Naive thymus-derived CD8-positive, alpha-beta T cell (primary cell): ENCODE measurements at regions of chr5 and their contacts with region 1.

Region 1: DNA sequence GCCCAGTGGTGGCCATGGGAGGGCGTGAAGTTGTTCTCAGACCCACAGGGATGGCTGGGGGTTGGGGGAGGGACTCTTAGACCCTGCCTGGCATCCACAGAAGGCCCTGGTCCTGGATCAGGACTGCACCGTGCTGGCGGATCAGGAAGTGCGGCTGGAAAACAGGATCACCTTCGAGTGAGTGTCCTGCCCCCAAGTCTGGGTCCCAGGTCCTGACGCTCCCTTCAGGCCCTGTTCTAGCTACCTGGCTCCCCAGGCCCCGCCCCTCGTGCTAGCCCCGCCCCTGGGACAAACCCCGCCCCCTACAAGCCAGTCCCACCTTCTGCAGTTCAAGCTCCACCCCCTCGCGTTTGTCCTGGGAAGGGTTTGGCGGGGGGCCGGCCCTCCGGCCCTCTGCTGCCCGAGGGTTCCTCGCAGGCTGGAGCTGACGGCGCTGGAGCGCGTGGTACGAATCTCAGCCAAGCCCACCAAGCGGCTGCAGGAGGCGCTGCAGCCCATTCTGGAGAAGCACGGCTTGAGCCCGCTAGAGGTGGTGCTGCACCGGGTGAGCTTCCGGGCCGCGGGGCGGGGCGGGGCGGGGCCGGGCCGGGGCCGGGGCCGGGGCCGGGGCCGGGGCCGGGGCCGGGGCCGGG is 12.9 kb downstream of the RGS14 start:
- DNase-seq: peak in 7 of 10 donors; percentile 45 to 82 (median 57)
- ATAC-seq: peak; percentile 77 to 80
- H3K4me3 Mint-ChIP-seq: peak overlapping the region in 5 of 10 donors; percentile 45 to 77 (median 61)
- H3K27ac Mint-ChIP-seq: peak overlapping the region in 5 of 10 donors; percentile 57 to 92 (median 85)
- H3K4me1 Mint-ChIP-seq: peaks cover 38 to 81% (median 75%) of the 10 kb centered on the region in 4 donors
- H3K27me3 Mint-ChIP-seq: no peaks in the 10 kb centered on the region

Region 2: GRCh38 chr5:177320879-177321278 is 49.7 kb before region 1 on chr5:
- POLR2A ChIA-PET with region 1: interaction called, 12 read pairs
- DNase-seq: no peak
- ATAC-seq: no peak
- H3K4me3 Mint-ChIP-seq: no peak overlapping the region
- H3K27ac Mint-ChIP-seq: no peak overlapping the region
- H3K4me1 Mint-ChIP-seq: peaks cover 14 to 27% (median 23%) of the 10 kb centered on the region in 4 donors
- H3K27me3 Mint-ChIP-seq: no peaks in the 10 kb centered on the region

Region 3: DNA sequence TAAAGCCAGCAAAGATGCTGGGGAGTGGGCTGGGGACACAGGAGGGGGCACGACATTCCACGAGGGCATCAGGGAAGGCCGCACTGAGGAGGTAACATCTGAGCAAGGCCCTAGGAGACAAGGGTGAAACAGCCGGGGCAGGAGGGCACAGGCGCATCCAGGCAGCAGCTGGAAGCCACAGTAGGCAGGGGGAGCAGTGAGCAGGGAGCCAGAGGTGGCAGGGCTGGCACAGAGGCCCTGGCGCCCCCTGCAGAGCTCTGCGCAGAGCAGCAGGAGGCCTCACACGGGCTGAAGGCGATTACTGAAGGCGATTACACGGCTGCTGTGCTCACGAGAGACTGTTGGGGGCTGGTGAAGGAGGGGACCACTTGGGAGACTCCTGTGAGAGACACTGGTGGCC is 34.5 kb before region 1 on chr5:
- POLR2A ChIA-PET with region 1: no interaction called
- DNase-seq: peak in 1 of 10 donors; percentile 19
- ATAC-seq: peak; percentile 68 to 73
- H3K4me3 Mint-ChIP-seq: peak overlapping the region in 1 of 10 donors; percentile 14
- H3K27ac Mint-ChIP-seq: peak overlapping the region in 1 of 10 donors; percentile 52
- H3K4me1 Mint-ChIP-seq: peaks cover 6 to 35% (median 28%) of the 10 kb centered on the region in 4 donors
- H3K27me3 Mint-ChIP-seq: no peaks in the 10 kb centered on the region

Region 4: GRCh38 chr5:177351385-177352329 is 18.9 kb before region 1 on chr5 and contains the start of gene LMAN2:
- POLR2A ChIA-PET with region 1: interaction called, 247 read pairs
- DNase-seq: peak; percentile 76 to 96 (median 91)
- ATAC-seq: peak; percentile 98
- H3K4me3 Mint-ChIP-seq: peak within 1 kb of the TSS; percentile 95 to 100 (median 98)
- H3K27ac Mint-ChIP-seq: peak within 1 kb of the TSS; percentile 97 to 100 (median 100)
- H3K4me1 Mint-ChIP-seq: peaks cover 23 to 74% (median 70%) of the 10 kb centered on the region in 4 donors
- H3K27me3 Mint-ChIP-seq: no peaks in the 10 kb centered on the region
- polyA plus RNA-seq, gene LMAN2: 212 to 243 (median 242) TPM

Region 5: GRCh38 chr5:177382423-177383029 is 11.9 kb after region 1 on chr5:
- POLR2A ChIA-PET with region 1: interaction called, 66 read pairs
- DNase-seq: peak in 7 of 10 donors; percentile 27 to 73 (median 38)
- ATAC-seq: peak; percentile 76 to 97
- H3K4me3 Mint-ChIP-seq: peak overlapping the region in 4 of 10 donors; percentile 27 to 47 (median 32)
- H3K27ac Mint-ChIP-seq: peak overlapping the region in 9 of 10 donors; percentile 35 to 84 (median 73)
- H3K4me1 Mint-ChIP-seq: peaks cover 20 to 53% (median 37%) of the 10 kb centered on the region in 4 donors
- H3K27me3 Mint-ChIP-seq: no peaks in the 10 kb centered on the region

Region 6: GRCh38 chr5:177403792-177404640 is 33.4 kb after region 1 on chr5:
- POLR2A ChIA-PET with region 1: interaction called, 42 read pairs
- DNase-seq: peak; percentile 73 to 92 (median 82)
- ATAC-seq: peak; percentile 80 to 81
- H3K4me3 Mint-ChIP-seq: peak overlapping the region; percentile 60 to 89 (median 80)
- H3K27ac Mint-ChIP-seq: peak overlapping the region in 5 of 10 donors; percentile 27 to 88 (median 60)
- H3K4me1 Mint-ChIP-seq: peaks cover 2 to 47% (median 37%) of the 10 kb centered on the region in 4 donors
- H3K27me3 Mint-ChIP-seq: peaks cover 0 to 9% (median 0%) of the 10 kb centered on the region in 5 donors

Region 7: DNA sequence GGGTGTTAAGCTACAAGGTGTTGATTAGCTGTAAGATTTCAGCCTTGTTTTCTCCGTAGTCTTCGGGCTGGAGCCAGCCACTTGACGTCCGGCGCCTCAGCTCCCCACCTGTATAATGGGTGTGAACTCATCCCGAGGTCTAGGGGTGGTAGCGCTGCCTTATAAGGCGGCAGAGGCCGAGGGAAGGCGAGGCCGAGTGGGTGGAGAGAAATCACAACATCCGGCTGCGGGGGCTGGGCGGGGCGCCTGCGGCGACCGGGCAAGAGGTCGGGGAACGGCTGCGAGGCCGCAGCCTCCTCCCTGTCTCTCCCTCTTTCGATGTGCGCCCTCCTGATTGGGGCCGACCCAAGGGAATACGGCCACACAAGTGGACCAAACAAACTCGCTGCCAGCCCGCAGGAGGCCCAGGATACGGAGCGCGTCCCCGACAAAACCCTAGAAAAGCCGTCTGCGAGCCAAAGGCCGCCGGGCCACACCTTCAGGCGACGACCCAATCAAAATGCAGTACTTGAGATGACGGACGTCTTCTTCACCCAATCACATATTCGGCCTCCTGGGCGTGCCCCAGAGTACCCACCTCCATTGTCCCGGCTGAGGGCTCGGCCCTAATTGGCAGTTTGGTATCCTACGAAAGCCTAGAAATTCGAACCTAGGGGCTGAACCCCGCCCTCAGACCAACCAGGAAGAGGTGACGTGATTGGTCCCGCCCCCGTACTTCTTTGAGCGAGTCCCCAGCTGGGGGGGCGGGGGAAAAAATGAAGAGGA is 55.4 kb after region 1 on chr5:
- POLR2A ChIA-PET with region 1: interaction called, 21 read pairs
- DNase-seq: peak; percentile 94 to 100 (median 100)
- ATAC-seq: peak; percentile 82 to 84
- H3K4me3 Mint-ChIP-seq: peak overlapping the region; percentile 82 to 98 (median 94)
- H3K27ac Mint-ChIP-seq: peak overlapping the region; percentile 92 to 100 (median 98)
- H3K4me1 Mint-ChIP-seq: peaks cover 28 to 58% (median 49%) of the 10 kb centered on the region in 4 donors
- H3K27me3 Mint-ChIP-seq: no peaks in the 10 kb centered on the region

Region 8: DNA sequence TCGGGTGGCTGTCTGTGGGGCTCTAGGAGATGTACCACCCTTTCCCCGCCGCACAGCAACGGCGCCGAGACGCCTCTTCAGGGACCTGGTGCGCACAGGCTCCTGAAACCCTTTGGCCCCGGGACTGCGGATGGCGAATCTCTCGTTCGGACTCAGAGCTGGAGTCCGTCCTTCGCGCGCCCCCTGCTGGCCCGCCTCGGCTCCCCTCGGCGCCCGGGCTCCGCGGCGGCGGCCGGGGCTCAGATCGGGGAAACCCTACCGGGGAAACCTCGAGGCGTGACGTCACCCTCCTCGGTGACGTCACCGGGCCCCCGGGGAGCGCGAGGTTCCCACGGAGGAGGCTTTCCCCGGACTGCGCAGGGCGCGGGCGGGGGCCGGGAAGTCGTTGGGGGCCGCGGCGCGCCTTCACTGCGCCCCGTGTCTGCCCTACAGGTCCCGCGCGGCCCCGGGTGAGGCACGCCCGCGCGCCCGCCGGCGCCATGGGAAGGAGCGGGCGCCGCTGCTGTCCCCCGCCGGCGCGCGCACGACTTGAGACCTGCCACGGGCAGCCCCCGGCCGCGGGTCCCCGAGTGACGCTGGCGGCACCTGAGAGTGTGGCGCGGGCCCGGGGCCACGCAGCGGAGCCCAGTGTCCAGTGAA is 83.9 kb after region 1 on chr5:
- POLR2A ChIA-PET with region 1: interaction called, 27 read pairs
- DNase-seq: peak; percentile 84 to 98 (median 94)
- ATAC-seq: peak; percentile 46 to 56
- H3K4me3 Mint-ChIP-seq: peak overlapping the region; percentile 33 to 93 (median 84)
- H3K27ac Mint-ChIP-seq: peak overlapping the region in 8 of 10 donors; percentile 67 to 98 (median 90)
- H3K4me1 Mint-ChIP-seq: peaks cover 14 to 41% (median 28%) of the 10 kb centered on the region in 4 donors
- H3K27me3 Mint-ChIP-seq: no peaks in the 10 kb centered on the region